ENCODE measurements at regions of chr11 and their contacts with region 1.

Region 1: GRCh38 chr11:57800444-57801182 is 39.0 kb downstream of the CTNND1 start:
- DNase-seq: no peak
- ATAC-seq: peak; percentile 83 to 90
- H3K4me3 ChIP-seq: no peak overlapping the region
- H3K27ac ChIP-seq: peak overlapping the region; percentile 45 to 71 (median 54)
- H3K4me1 ChIP-seq: peaks cover 30 to 42% of the 10 kb centered on the region in 2 donors
- H3K27me3 ChIP-seq: no peaks in the 10 kb centered on the region
- CTCF ChIP-seq: peak; percentile 83 to 92 (median 84)
- POLR2A ChIP-seq: no peak

Region 2: DNA sequence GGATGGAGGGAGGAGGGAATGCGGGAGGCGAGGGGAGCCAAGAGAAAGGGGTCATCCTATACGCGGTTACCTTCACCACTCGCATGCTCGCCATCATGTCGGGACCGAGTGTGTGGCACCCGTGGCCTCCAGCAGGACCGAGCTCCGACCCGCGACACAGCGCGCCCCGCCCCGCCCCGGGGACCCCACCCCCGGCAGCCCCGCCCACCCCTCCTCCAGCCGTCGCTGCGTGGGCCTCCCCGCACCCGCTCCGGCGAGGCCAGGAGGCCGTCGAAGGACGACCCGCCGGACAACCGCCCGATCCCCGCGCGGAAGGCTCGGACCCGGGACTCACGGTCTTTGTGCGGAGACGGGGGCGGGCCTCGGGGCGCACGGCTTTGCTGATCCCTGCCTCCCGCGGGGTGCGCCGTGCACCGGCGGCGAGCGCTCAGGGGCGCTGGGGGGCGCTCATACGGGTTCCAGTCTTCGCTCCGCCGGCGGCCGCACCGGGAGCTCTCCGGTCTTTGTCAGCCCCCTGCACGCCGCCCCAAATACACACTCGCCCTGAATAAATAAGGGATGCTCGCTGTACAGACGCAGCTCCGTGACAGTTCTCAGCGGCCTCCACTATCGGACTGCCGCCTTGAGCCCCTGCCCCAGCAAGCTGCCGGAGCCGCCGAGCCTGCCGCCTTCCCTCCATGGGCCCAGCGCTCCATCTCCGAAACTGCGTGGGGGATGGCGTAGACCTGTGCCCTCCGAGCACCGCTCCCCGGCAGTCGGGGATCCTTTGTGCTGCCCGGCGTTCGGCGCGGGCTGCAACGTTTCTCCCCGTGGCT is 232.9 kb before region 1 on chr11 and contains the start of gene UBE2L6:
- in situ Hi-C with region 1: loop called in 1 of 4 experiments (anchors 25 kb)
- intact Hi-C with region 1: loop called (anchors 10 kb)
- DNase-seq: peak in 1 of 2 donors; percentile 14
- ATAC-seq: peak; percentile 69 to 71
- H3K4me3 ChIP-seq: peak within 1 kb of the TSS; percentile 81 to 99 (median 88)
- H3K27ac ChIP-seq: peak within 1 kb of the TSS; percentile 74 to 79 (median 78)
- H3K4me1 ChIP-seq: peaks cover 13 to 32% of the 10 kb centered on the region in 2 donors
- H3K27me3 ChIP-seq: no peaks in the 10 kb centered on the region
- CTCF ChIP-seq: peak in 2 of 5 experiments; percentile 72 to 78
- POLR2A ChIP-seq: no peak
- total RNA-seq, gene UBE2L6: 5.5 to 9.0 (median 6.7) TPM

Region 3: DNA sequence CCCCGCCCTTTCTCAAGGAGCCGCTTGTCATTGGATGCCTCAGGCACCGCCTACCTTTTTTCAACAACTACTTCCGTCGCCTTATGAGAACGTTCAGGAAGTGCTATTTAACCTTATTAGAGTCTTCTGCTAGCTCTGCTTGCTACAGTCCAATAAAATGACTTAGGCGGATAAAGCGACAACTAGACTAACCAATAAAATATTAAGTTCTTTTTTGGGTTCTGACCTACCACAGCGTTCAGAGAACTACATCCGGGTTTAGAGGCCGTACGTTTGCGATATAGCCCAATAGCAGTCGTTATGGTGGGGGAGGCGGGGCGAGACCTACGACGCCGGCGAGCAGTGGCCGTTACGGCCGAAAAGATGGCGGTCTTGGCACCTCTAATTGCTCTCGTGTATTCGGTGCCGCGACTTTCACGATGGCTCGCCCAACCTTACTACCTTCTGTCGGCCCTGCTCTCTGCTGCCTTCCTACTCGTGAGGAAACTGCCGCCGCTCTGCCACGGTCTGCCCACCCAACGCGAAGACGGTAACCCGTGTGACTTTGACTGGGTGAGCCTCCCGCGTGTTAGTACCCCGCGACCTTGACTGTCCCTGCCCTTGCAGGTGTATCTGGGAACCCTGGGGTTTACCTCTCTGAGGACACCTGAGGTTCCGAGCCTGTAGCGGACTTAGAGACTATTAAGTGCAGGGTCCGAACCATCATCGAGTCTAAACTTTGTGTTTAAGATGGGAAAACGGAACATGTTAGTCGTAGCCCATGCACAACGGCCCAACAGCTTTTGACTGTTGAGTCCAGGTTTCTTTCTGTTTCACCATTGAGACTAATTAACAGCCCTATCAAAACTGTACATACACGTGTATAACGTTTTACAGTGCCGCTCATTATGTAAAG is 88.1 kb before region 1 on chr11 and contains the start of gene TMX2:
- in situ Hi-C with region 1: no loop called
- intact Hi-C with region 1: loop called (anchors 1 kb)
- DNase-seq: peak; percentile 90 to 95
- ATAC-seq: peak; percentile 98
- H3K4me3 ChIP-seq: peak within 1 kb of the TSS; percentile 82 to 99 (median 92)
- H3K27ac ChIP-seq: peak within 1 kb of the TSS; percentile 87 to 91 (median 89)
- H3K4me1 ChIP-seq: peaks cover 33 to 34% of the 10 kb centered on the region in 2 donors
- H3K27me3 ChIP-seq: no peaks in the 10 kb centered on the region
- CTCF ChIP-seq: peak in 1 of 5 experiments; percentile 3
- POLR2A ChIP-seq: peak; percentile 49 to 59
- total RNA-seq, gene TMX2: 29.1 to 54.9 (median 40.5) TPM

Region 4: DNA sequence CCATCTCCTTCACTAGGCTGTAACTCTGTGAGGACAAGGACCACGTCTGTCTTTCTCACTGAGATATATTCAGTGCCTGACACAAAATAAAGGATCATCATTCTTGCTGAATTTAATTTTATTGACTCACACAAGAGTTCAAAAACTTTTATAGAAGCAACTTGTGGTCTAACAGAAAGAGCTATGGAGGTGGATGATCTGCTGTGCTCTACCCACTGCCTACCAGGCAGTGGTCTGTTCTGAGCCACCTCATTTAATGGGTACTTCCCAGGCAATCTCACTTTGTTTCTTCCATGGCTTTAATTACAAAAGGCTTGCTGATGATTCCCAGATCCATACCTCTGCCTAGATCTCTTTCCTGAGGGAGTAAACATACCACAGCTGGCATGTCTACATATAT is 53.7 kb before region 1 on chr11:
- in situ Hi-C with region 1: loop called in 3 of 4 experiments (anchors 5 to 10 kb)
- intact Hi-C with region 1: loop called (anchors 5 kb)
- DNase-seq: no peak
- ATAC-seq: no peak
- H3K4me3 ChIP-seq: no peak overlapping the region
- H3K27ac ChIP-seq: no peak overlapping the region
- H3K4me1 ChIP-seq: peaks cover 11 to 14% of the 10 kb centered on the region in 2 donors
- H3K27me3 ChIP-seq: no peaks in the 10 kb centered on the region
- CTCF ChIP-seq: no peak
- POLR2A ChIP-seq: no peak

Region 5: DNA sequence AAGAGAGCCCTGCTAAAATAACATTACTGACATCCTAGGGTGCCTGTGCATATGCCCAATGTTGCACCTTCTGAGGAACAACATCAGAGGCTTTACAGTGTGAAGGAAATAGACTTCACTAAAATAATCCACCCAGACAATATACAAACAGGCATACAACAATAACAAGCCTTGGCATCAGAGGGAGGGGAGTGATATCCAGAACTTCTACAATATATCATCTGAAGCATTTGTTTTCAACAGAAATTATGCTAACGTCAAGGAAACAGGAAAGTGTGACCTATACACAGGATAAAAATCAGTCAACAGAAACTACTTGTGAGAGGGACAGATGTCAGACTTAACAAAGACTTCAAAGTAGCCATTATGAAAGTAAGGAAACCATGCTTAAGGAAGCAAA is 42.3 kb after region 1 on chr11:
- in situ Hi-C with region 1: no loop called
- intact Hi-C with region 1: no loop called
- DNase-seq: no peak
- ATAC-seq: no peak
- H3K4me3 ChIP-seq: no peak overlapping the region
- H3K27ac ChIP-seq: no peak overlapping the region
- H3K4me1 ChIP-seq: no peaks in the 10 kb centered on the region
- H3K27me3 ChIP-seq: no peaks in the 10 kb centered on the region
- CTCF ChIP-seq: no peak
- POLR2A ChIP-seq: no peak

Region 6: DNA sequence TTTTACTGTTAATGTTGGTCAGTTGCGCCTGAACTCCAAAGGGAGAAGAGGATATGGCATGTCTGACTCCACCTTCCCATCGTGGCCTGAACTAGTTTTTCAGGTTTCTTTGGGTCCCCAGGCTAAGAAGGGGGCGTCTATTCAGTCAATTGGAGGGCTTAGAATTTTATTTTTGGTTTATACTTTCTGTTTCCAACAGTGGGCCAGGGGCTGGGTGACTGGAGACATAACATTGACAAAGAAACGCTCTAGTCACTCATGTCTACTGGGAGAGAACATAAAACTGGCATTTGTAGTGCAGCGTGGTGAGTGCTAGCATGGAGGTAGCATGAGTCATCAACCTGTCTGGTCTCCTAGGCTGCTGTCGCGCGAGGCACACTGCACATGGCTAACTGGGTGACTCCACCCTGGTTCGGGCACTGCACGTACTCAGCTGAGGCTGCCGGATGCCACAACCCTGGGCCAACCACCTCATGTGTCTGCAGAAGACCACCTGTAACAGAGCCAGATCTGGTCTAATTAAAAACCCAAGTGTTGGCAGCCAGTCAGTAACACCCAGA is 103.0 kb after region 1 on chr11:
- in situ Hi-C with region 1: no loop called
- intact Hi-C with region 1: no loop called
- DNase-seq: peak; percentile 3 to 24
- ATAC-seq: peak; percentile 56 to 66
- H3K4me3 ChIP-seq: peak overlapping the region in 2 of 4 donors; percentile 25 to 36
- H3K27ac ChIP-seq: peak overlapping the region in 3 of 4 donors; percentile 33 to 61 (median 53)
- H3K4me1 ChIP-seq: peaks cover 0 to 4% of the 10 kb centered on the region in 2 donors
- H3K27me3 ChIP-seq: no peaks in the 10 kb centered on the region
- CTCF ChIP-seq: no peak
- POLR2A ChIP-seq: no peak

Region 7: GRCh38 chr11:58524232-58525036 is 723.8 kb after region 1 on chr11:
- in situ Hi-C with region 1: loop called in 1 of 4 experiments (anchors 25 kb)
- intact Hi-C with region 1: no loop called
- DNase-seq: peak in 1 of 2 donors; percentile 49
- ATAC-seq: peak; percentile 54 to 82
- H3K4me3 ChIP-seq: no peak overlapping the region
- H3K27ac ChIP-seq: no peak overlapping the region
- H3K4me1 ChIP-seq: no peaks in the 10 kb centered on the region
- H3K27me3 ChIP-seq: no peaks in the 10 kb centered on the region
- CTCF ChIP-seq: peak; percentile 40 to 70 (median 48)
- POLR2A ChIP-seq: no peak